ENCODE measurements at regions of chr14 and their contacts with region 1.

Region 1: DNA sequence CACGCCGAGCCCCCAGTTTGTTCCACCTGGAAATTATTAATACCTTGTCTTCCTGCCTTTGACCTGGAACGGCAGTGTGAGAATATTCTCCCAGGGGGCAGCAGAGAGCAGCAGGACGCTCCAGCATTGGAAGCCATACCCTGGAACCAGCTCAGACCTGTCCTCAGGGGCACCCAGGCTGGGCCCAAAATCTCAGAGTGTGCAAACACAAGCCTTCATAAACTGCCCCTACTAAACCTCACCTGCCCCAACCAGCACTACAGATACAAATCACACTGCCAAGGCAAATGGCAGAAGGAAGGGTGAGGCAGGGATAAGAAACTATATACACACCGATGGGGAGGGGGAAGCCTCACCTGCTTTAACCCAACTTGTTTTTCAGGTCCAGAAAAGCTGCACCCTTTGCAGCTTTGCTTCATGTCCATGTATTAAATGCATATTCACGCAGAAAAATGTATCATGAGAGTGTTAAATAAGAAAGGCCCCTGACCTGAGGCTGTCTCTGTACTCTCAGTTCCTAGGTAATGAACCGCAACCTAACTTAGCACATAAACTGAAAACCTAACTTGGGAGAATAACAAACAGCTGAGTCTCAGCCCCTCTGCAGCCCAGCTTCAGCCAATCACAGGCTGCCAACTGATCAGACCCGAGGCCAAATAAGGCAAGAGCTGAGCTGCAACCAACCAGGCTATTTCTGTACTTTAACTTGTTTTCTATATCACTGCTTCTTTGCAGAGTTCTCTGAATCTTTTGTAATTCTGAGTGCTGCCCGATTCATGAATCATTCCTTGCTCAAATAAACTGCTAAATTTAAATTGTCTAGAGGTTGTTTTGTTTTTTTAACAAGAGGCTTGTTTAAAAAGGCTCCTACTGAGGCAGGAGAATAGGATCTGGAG is 130.1 kb downstream of the SPTSSA start:
- DNase-seq: peak; percentile 17 to 72 (median 46)
- ATAC-seq: peak; percentile 64
- H3K4me3 ChIP-seq: no peak overlapping the region
- H3K4me3 Mint-ChIP-seq: no peak overlapping the region
- H3K27ac ChIP-seq: no peak overlapping the region
- H3K27ac Mint-ChIP-seq: no peak overlapping the region
- H3K4me1 ChIP-seq: peaks cover 7% of the 10 kb centered on the region
- H3K4me1 Mint-ChIP-seq: peaks cover 11% of the 10 kb centered on the region
- H3K27me3 ChIP-seq: no peaks in the 10 kb centered on the region
- H3K27me3 Mint-ChIP-seq: no peaks in the 10 kb centered on the region
- CTCF ChIP-seq: peak; percentile 85

Region 2: DNA sequence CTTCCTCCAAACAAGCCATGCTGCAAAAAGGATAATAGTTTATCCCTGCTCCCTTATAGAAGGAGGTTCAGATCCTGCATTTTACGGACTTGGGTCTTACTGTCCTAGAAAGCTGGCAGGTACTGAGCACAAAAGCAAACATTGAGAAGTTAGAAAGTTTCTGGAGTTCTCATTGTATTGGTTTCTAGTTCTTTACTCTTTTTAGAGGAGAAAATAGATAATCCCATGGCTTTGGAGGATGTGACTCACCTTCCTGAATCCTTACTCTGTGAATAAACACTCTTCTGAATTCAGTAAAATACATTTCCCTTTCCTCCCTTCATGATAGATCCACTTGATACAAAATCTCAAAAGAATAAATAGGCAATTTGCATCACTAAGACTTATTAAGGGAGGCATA is 1204.4 kb before region 1 on chr14:
- CTCF ChIA-PET with region 1: no interaction called
- POLR2A ChIA-PET with region 1: no interaction called
- intact Hi-C with region 1: no loop called
- DNase-seq: no peak
- ATAC-seq: no peak
- H3K4me3 ChIP-seq: no peak overlapping the region
- H3K4me3 Mint-ChIP-seq: no peak overlapping the region
- H3K27ac ChIP-seq: no peak overlapping the region
- H3K27ac Mint-ChIP-seq: no peak overlapping the region
- H3K4me1 ChIP-seq: no peaks in the 10 kb centered on the region
- H3K4me1 Mint-ChIP-seq: no peaks in the 10 kb centered on the region
- H3K27me3 ChIP-seq: no peaks in the 10 kb centered on the region
- H3K27me3 Mint-ChIP-seq: no peaks in the 10 kb centered on the region
- CTCF ChIP-seq: no peak

Region 3: DNA sequence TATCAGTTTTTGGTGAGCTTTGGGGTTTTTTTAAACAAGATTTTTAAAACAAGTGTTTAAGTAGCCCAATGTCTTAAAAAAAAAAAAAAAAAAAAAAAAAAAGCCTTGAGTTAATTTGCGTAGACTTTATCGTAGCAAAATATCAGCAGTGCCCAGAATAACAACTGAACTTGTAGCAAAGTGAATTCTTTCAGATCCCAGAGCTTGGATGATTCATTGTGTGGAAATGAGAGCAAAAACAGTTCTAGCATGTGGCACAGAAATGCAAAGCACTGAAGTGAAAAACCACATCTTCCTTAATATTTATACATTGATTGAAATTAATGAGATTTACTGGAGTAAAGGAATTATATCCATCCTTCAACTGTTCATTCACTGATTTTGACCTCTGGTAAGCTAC is 639.2 kb before region 1 on chr14:
- CTCF ChIA-PET with region 1: no interaction called
- POLR2A ChIA-PET with region 1: no interaction called
- intact Hi-C with region 1: no loop called
- DNase-seq: no peak
- ATAC-seq: no peak
- H3K4me3 ChIP-seq: no peak overlapping the region
- H3K4me3 Mint-ChIP-seq: no peak overlapping the region
- H3K27ac ChIP-seq: no peak overlapping the region
- H3K27ac Mint-ChIP-seq: no peak overlapping the region
- H3K4me1 ChIP-seq: no peaks in the 10 kb centered on the region
- H3K4me1 Mint-ChIP-seq: no peaks in the 10 kb centered on the region
- H3K27me3 ChIP-seq: no peaks in the 10 kb centered on the region
- H3K27me3 Mint-ChIP-seq: no peaks in the 10 kb centered on the region
- CTCF ChIP-seq: no peak

Region 4: DNA sequence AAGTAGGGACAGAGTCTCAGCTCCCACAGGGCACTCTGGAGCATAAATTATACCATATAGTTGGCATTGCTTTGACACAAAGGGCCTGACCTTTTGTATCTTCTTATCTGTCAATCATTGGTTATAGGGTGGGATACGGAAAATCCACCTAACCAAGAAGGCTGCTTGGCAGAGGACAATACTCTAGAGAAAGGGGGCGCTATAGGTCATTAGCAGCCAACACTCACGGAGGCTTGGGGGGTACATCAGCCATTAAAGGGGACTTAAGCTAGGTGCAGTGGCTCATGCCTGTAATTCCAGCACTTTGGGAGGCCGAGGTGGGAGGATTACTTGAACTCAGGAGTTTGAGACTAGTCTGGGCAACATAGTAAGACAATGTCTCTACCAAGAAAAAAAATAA is 107.1 kb after region 1 on chr14:
- CTCF ChIA-PET with region 1: no interaction called
- POLR2A ChIA-PET with region 1: no interaction called
- intact Hi-C with region 1: no loop called
- DNase-seq: no peak
- ATAC-seq: no peak
- H3K4me3 ChIP-seq: no peak overlapping the region
- H3K4me3 Mint-ChIP-seq: no peak overlapping the region
- H3K27ac ChIP-seq: no peak overlapping the region
- H3K27ac Mint-ChIP-seq: no peak overlapping the region
- H3K4me1 ChIP-seq: no peaks in the 10 kb centered on the region
- H3K4me1 Mint-ChIP-seq: no peaks in the 10 kb centered on the region
- H3K27me3 ChIP-seq: no peaks in the 10 kb centered on the region
- H3K27me3 Mint-ChIP-seq: no peaks in the 10 kb centered on the region
- CTCF ChIP-seq: no peak

Region 5: GRCh38 chr14:34496679-34497513 is 164.9 kb after region 1 on chr14:
- CTCF ChIA-PET with region 1: interaction called, 5 read pairs
- POLR2A ChIA-PET with region 1: no interaction called
- intact Hi-C with region 1: loop called (anchors 1 to 5 kb)
- DNase-seq: peak in 1 of 14 experiments; percentile 4
- ATAC-seq: no peak
- H3K4me3 ChIP-seq: no peak overlapping the region
- H3K4me3 Mint-ChIP-seq: no peak overlapping the region
- H3K27ac ChIP-seq: no peak overlapping the region
- H3K27ac Mint-ChIP-seq: no peak overlapping the region
- H3K4me1 ChIP-seq: no peaks in the 10 kb centered on the region
- H3K4me1 Mint-ChIP-seq: no peaks in the 10 kb centered on the region
- H3K27me3 ChIP-seq: no peaks in the 10 kb centered on the region
- H3K27me3 Mint-ChIP-seq: no peaks in the 10 kb centered on the region
- CTCF ChIP-seq: no peak

Region 6: GRCh38 chr14:34582117-34582680 is 250.2 kb after region 1 on chr14:
- CTCF ChIA-PET with region 1: no interaction called
- POLR2A ChIA-PET with region 1: no interaction called
- intact Hi-C with region 1: no loop called
- DNase-seq: no peak
- ATAC-seq: no peak
- H3K4me3 ChIP-seq: no peak overlapping the region
- H3K4me3 Mint-ChIP-seq: no peak overlapping the region
- H3K27ac ChIP-seq: no peak overlapping the region
- H3K27ac Mint-ChIP-seq: no peak overlapping the region
- H3K4me1 ChIP-seq: no peaks in the 10 kb centered on the region
- H3K4me1 Mint-ChIP-seq: no peaks in the 10 kb centered on the region
- H3K27me3 ChIP-seq: no peaks in the 10 kb centered on the region
- H3K27me3 Mint-ChIP-seq: no peaks in the 10 kb centered on the region
- CTCF ChIP-seq: no peak

Measured in CD4-positive, alpha-beta T cell (primary cell).